BJ (cell line): ENCODE measurements at regions of chr6 and their contacts with region 1.

Region 1: GRCh38 chr6:71510057-71510713 is 221.6 kb downstream of the OGFRL1 start:
- DNase-seq: peak; percentile 35
- H3K4me3 ChIP-seq: no peak overlapping the region
- H3K27me3 ChIP-seq: no peaks in the 10 kb centered on the region
- CTCF ChIP-seq: peak; percentile 73

Region 2: DNA sequence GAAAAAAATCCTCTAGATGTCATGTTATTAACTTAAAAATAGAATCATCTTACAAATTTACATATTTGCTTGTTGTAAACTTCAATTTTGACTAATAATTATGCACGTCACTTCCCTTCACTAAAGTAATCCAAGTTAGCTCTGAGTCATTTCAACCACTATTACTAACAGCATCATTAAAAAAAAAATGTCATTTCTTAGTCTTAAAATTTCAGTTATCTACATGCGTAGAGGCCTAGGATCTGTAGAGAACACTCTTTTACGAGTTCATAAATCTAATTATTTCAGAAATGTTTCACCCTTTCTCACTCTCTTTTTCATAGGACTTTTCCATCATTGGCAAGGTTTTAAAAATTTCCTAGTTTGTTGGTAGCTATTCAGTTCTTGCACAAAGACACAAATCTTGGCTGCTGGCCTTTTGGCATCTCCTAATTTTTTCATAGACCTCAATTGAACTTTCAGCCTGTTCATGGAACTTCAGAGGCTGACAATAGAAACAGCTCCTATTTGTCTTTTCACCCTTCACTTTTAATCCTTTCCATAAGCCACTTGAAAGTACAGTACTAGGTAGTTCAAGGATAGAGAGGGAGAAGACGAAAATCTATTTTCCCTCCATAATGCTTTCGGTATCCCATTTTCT is 160.1 kb before region 1 on chr6:
- CTCF ChIA-PET with region 1: interaction called, 13 read pairs
- POLR2A ChIA-PET with region 1: no interaction called
- DNase-seq: peak; percentile 71
- H3K4me3 ChIP-seq: no peak overlapping the region
- H3K27me3 ChIP-seq: no peaks in the 10 kb centered on the region
- CTCF ChIP-seq: no peak

Region 3: DNA sequence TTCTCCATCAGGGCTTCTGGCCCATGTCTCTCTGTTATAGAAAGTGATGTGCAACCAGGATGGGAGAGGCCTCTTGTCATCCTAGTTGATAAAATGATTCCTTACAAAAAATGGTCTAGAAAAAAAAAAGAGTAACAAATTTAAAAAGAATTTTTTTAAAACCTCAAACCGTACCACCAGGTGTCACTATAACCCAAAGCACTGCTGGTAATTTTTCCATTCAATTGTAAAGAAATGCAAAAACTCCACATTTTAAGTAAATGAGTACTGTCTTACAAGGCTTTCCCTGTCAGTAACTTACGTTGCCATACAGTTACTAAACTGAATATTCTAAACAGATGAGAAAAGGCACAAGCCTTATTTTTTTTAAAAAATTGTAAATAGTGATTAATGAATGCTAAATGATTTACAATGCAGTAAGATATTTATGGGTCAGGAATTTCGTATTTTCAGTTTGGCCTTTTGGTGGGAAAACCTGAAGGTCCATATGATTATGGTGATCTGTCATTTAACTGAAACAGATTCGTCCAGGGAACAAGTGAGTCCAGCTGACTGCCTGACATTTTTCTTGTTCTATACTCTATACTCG is 126.2 kb before region 1 on chr6:
- CTCF ChIA-PET with region 1: interaction called, 103 read pairs
- POLR2A ChIA-PET with region 1: no interaction called
- DNase-seq: no peak
- H3K4me3 ChIP-seq: no peak overlapping the region
- H3K27me3 ChIP-seq: no peaks in the 10 kb centered on the region
- CTCF ChIP-seq: peak; percentile 50

Region 4: DNA sequence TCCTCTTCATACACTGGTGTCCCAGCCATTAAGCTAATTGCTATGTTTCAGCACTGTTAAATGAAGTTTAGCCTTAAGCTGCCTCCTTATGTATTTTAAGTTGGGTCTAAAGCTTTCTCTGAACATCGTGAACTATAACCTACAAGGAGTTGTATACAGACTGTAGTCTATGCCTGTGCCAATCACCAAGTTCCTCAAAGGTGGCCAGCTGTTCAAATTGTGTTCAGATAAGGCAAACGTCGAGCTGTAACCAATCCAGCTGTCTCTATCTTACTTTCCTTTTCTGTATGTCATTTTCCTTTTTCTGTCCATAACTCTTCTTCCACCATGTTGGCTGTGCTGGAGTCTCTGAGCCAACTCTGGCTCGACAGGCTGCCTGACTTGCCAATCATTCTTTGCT is 22.0 kb before region 1 on chr6:
- CTCF ChIA-PET with region 1: interaction called, 10 read pairs
- POLR2A ChIA-PET with region 1: no interaction called
- DNase-seq: no peak
- H3K4me3 ChIP-seq: no peak overlapping the region
- H3K27me3 ChIP-seq: no peaks in the 10 kb centered on the region
- CTCF ChIP-seq: no peak

Region 5: GRCh38 chr6:71523548-71523947 is 13.4 kb after region 1 on chr6:
- CTCF ChIA-PET with region 1: interaction called, 12 read pairs
- POLR2A ChIA-PET with region 1: no interaction called
- DNase-seq: no peak
- H3K4me3 ChIP-seq: no peak overlapping the region
- H3K27me3 ChIP-seq: no peaks in the 10 kb centered on the region
- CTCF ChIP-seq: no peak

Region 6: DNA sequence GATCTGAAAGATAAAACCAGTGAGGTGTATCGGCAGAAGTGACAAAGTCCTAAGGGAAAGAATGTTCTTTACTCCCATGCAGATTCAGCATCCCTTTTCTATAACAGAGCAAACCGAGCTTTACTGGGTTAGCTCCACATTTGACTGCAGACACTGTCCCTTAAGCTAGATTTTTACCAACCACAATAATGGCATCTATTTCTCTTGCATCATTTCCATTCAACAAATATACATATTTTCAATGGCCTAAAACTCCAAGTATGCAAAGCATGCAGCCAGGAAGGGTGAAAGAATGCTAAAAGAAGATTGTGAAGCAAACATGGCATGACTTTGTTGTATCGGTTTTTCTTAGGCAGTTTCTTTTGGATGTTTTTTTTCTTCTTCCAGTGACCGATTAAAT is 33.8 kb after region 1 on chr6:
- CTCF ChIA-PET with region 1: no interaction called
- POLR2A ChIA-PET with region 1: no interaction called
- DNase-seq: peak; percentile 23
- H3K4me3 ChIP-seq: no peak overlapping the region
- H3K27me3 ChIP-seq: no peaks in the 10 kb centered on the region
- CTCF ChIP-seq: no peak

Region 7: GRCh38 chr6:71599351-71599750 is 89.2 kb after region 1 on chr6:
- CTCF ChIA-PET with region 1: no interaction called
- POLR2A ChIA-PET with region 1: no interaction called
- DNase-seq: no peak
- H3K4me3 ChIP-seq: no peak overlapping the region
- H3K27me3 ChIP-seq: no peaks in the 10 kb centered on the region
- CTCF ChIP-seq: no peak